CD4-positive, alpha-beta memory T cell (primary cell): ENCODE measurements at regions of chr17 and their contacts with region 1.

Region 1: GRCh38 chr17:80426681-80427326 is 11.8 kb downstream of the ENDOV start:
- DNase-seq: peak; percentile 83 to 87 (median 86)
- H3K4me3 ChIP-seq: no peak overlapping the region
- H3K4me3 Mint-ChIP-seq: no peak overlapping the region
- H3K27ac ChIP-seq: no peak overlapping the region
- H3K27ac Mint-ChIP-seq: peak overlapping the region in 4 of 7 donors; percentile 47 to 80 (median 68)
- H3K4me1 ChIP-seq: peaks cover 13% of the 10 kb centered on the region
- H3K4me1 Mint-ChIP-seq: peaks cover 4 to 13% (median 9%) of the 10 kb centered on the region in 4 donors
- H3K27me3 ChIP-seq: no peaks in the 10 kb centered on the region
- H3K27me3 Mint-ChIP-seq: no peaks in the 10 kb centered on the region

Region 2: GRCh38 chr17:80981062-80981902 is 554.5 kb after region 1 on chr17:
- CTCF ChIA-PET with region 1: interaction called, 21 read pairs
- POLR2A ChIA-PET with region 1: interaction called, 4 read pairs
- intact Hi-C with region 1: loop called (anchors 1 kb)
- DNase-seq: peak in 4 of 5 donors; percentile 30 to 47 (median 34)
- H3K4me3 ChIP-seq: no peak overlapping the region
- H3K4me3 Mint-ChIP-seq: peak overlapping the region in 3 of 8 donors; percentile 65 to 72 (median 70)
- H3K27ac ChIP-seq: no peak overlapping the region
- H3K27ac Mint-ChIP-seq: no peak overlapping the region
- H3K4me1 ChIP-seq: peaks cover 7% of the 10 kb centered on the region
- H3K4me1 Mint-ChIP-seq: peaks cover 0 to 14% (median 7%) of the 10 kb centered on the region in 4 donors
- H3K27me3 ChIP-seq: no peaks in the 10 kb centered on the region
- H3K27me3 Mint-ChIP-seq: peaks cover 14% of the 10 kb centered on the region in 2 donors